PC-9 (cell line): ENCODE measurements at regions of chr19 and their contacts with region 1.

Region 1: DNA sequence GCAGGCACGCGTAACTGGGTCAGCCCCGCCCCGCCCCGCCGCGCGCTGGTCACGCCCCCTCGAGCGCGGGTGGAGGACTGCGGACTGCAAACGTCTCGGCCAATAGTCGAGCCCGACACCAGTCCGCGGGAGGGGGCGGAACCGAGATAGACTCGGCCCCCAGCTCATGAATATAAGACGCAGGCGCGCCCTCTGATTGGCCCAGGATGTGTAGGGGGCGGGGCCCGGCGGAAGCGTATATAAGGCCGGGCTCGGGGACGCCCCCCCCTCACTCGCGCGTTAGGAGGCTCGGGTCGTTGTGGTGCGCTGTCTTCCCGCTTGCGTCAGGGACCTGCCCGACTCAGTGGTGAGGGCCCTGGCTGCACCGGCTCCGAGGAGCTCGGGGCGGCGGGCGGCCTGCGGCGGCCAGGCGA is at the start of gene CIRBP:
- DNase-seq: peak; percentile 90 to 97
- H3K4me3 ChIP-seq: peak within 1 kb of the TSS; percentile 67
- H3K27ac ChIP-seq: peak within 1 kb of the TSS; percentile 82
- H3K4me1 ChIP-seq: peaks cover 51% of the 10 kb centered on the region
- H3K27me3 ChIP-seq: no peaks in the 10 kb centered on the region
- CTCF ChIP-seq: no peak
- total RNA-seq, gene CIRBP: 86.9 and 143 TPM in 2 replicates

Region 2: DNA sequence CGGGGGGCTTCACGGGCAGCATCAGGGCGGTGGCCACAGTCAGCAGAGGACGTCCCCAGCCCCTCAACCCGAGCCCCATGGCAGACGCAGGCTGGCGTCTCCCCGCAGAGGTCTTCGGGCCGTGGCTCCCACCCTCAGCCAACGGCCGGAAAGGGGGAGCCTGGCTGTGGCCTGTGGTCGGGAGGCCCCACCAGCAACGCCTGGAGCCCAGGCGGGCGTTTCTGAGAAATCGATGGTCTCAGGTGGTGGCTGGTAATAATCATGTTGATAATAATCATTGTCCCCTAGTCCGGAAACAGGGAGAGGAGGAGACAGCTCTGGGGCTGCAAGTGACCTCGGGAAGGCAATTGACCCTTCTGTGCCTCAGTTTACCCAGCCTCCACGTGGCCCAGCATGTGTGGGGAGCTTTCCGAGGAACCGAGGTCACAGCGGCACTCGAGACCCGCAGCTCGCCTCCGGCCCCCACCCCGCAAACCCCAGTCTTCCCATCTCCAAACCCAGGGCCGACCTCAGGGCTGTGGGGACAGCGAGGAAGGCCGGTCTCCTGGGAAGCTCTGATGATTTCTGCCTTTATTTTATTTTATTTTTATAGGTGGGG is 573.6 kb before region 1 on chr19 and contains the start of gene PRSS57:
- CTCF ChIA-PET with region 1: no interaction called
- POLR2A ChIA-PET with region 1: interaction called, 10 read pairs
- intact Hi-C with region 1: no loop called
- DNase-seq: no peak
- H3K4me3 ChIP-seq: no peak within 1 kb of the TSS
- H3K27ac ChIP-seq: no peak within 1 kb of the TSS
- H3K4me1 ChIP-seq: no peaks in the 10 kb centered on the region
- H3K27me3 ChIP-seq: peaks cover 18% of the 10 kb centered on the region
- CTCF ChIP-seq: no peak
- total RNA-seq, gene PRSS57: not detected in 2 replicates

Region 3: GRCh38 chr19:1239798-1240737 is 29.0 kb before region 1 on chr19:
- CTCF ChIA-PET with region 1: interaction called, 76 read pairs
- POLR2A ChIA-PET with region 1: interaction called, 23 read pairs
- intact Hi-C with region 1: no loop called
- DNase-seq: peak; percentile 43 to 85
- H3K4me3 ChIP-seq: peak overlapping the region; percentile 73
- H3K27ac ChIP-seq: no peak overlapping the region
- H3K4me1 ChIP-seq: peaks cover 23% of the 10 kb centered on the region
- H3K27me3 ChIP-seq: no peaks in the 10 kb centered on the region
- CTCF ChIP-seq: peak; percentile 53

Region 4: GRCh38 chr19:1249298-1249989 is 19.6 kb before region 1 on chr19:
- CTCF ChIA-PET with region 1: interaction called, 76 read pairs
- POLR2A ChIA-PET with region 1: interaction called, 33 read pairs
- intact Hi-C with region 1: loop called (anchors 2 kb)
- DNase-seq: peak; percentile 70 to 90
- H3K4me3 ChIP-seq: peak overlapping the region; percentile 61; the same call in 1 of the 2 replicates
- H3K27ac ChIP-seq: peak overlapping the region; percentile 84
- H3K4me1 ChIP-seq: peaks cover 22% of the 10 kb centered on the region
- H3K27me3 ChIP-seq: no peaks in the 10 kb centered on the region
- CTCF ChIP-seq: no peak

Region 5: GRCh38 chr19:1734321-1734966 is 465.4 kb after region 1 on chr19:
- CTCF ChIA-PET with region 1: no interaction called
- POLR2A ChIA-PET with region 1: interaction called, 13 read pairs
- intact Hi-C with region 1: no loop called
- DNase-seq: no peak
- H3K4me3 ChIP-seq: no peak overlapping the region
- H3K27ac ChIP-seq: no peak overlapping the region
- H3K4me1 ChIP-seq: no peaks in the 10 kb centered on the region
- H3K27me3 ChIP-seq: no peaks in the 10 kb centered on the region
- CTCF ChIP-seq: no peak

Region 6: DNA sequence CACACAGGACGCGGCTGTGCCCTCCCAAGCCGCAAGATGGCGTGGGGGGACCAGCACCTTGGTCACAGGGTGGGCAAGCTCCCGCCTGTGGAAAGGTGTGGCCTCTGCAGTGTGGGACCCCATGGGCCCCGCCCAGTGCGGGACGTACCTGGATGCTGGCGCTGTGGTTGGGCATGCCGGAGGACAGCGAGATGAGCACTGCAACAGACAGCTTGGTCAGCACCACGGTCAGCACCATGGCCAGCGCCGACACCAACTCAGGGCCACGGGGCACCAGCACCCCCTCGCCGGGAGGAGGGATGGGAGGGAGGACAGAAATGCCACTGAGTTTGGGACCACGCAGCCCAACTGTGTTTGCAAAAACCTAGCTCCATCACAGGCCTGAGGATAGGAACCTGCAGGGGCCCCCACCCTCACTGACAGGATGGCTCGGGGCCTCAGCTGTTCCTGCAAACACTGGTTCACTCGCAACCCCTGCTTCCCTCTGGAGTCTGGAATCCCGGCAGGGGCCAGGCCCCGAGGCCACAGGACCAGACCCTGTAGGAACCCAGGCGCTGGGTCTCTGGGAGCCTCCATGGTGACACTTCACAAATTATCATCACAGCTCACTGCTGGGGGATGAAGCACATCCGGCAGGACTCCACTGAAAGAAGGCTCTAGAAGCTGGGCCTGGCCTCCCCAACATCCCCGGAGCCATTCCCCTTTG is 854.8 kb after region 1 on chr19:
- CTCF ChIA-PET with region 1: no interaction called
- POLR2A ChIA-PET with region 1: no interaction called
- intact Hi-C with region 1: no loop called
- DNase-seq: no peak
- H3K4me3 ChIP-seq: no peak overlapping the region
- H3K27ac ChIP-seq: no peak overlapping the region
- H3K4me1 ChIP-seq: no peaks in the 10 kb centered on the region
- H3K27me3 ChIP-seq: no peaks in the 10 kb centered on the region
- CTCF ChIP-seq: no peak